Dendritic cell treated with granulocyte-macrophage colony-stimulating factor and Interleukin-4, amounts not matched to agents 40 ng/mL and 50 ng/mL, for 4 days (primary cell): ENCODE measurements at regions of chr11 and their contacts with region 1.

Region 1: GRCh38 chr11:117443266-117444195 is 115.9 kb downstream of the CEP164 start:
- H3K4me3 Mint-ChIP-seq: no peak overlapping the region
- H3K27ac Mint-ChIP-seq: no peak overlapping the region
- H3K4me1 Mint-ChIP-seq: no peaks in the 10 kb centered on the region
- H3K27me3 Mint-ChIP-seq: peaks cover 41% of the 10 kb centered on the region

Region 2: GRCh38 chr11:117159892-117160291 is 283.6 kb before region 1 on chr11:
- intact Hi-C with region 1: no loop called
- H3K4me3 Mint-ChIP-seq: no peak overlapping the region
- H3K27ac Mint-ChIP-seq: no peak overlapping the region
- H3K4me1 Mint-ChIP-seq: peaks cover 6% of the 10 kb centered on the region
- H3K27me3 Mint-ChIP-seq: no peaks in the 10 kb centered on the region

Region 3: GRCh38 chr11:117327567-117328374 is 115.8 kb before region 1 on chr11 and contains the start of gene CEP164:
- intact Hi-C with region 1: no loop called
- H3K4me3 Mint-ChIP-seq: no peak within 1 kb of the TSS
- H3K27ac Mint-ChIP-seq: no peak within 1 kb of the TSS
- H3K4me1 Mint-ChIP-seq: peaks cover 11% of the 10 kb centered on the region
- H3K27me3 Mint-ChIP-seq: no peaks in the 10 kb centered on the region

Region 4: GRCh38 chr11:117484156-117484555 is 40.6 kb after region 1 on chr11:
- intact Hi-C with region 1: no loop called
- H3K4me3 Mint-ChIP-seq: no peak overlapping the region
- H3K27ac Mint-ChIP-seq: no peak overlapping the region
- H3K4me1 Mint-ChIP-seq: no peaks in the 10 kb centered on the region
- H3K27me3 Mint-ChIP-seq: peaks cover 2% of the 10 kb centered on the region

Region 5: DNA sequence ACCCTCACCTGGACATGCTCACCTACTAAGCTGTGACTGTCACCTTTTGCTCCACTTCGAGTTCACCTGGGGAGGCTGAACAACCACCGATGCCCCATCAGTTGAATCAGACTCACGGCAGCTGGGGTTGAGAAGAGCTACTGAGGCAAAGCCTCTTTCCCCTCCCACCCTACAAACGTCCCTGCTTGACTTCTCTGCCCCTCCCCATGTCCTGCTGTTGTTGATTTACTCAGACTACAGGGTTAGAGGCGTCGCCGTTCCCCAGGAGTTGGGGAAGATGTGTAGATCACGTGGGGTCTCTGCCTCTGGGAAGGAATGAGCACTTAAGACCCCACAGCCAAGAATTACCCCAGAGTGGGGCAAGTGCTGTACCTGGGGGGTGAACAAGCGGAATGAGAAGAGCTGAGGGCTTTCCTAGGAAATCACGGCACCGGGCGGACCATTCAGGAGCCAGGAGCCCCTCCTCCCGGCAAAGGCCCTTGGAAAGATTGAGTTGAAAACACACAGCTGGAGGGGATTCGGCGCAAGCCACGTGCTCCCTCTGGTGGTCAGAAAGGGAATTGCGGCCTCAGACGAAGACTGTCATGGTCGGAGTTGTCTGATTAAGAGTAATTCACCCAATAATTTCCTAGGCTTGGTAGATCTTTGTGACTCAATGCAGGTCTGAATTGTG is 374.0 kb after region 1 on chr11:
- intact Hi-C with region 1: loop called (anchors 5 kb)
- H3K4me3 Mint-ChIP-seq: peak overlapping the region; percentile 58
- H3K27ac Mint-ChIP-seq: peak overlapping the region; percentile 97
- H3K4me1 Mint-ChIP-seq: peaks cover 84% of the 10 kb centered on the region
- H3K27me3 Mint-ChIP-seq: no peaks in the 10 kb centered on the region